Adrenal gland (tissue), 19 donors: ENCODE measurements at regions of chr9 and their contacts with region 1.

Region 1: GRCh38 chr9:87324613-87325194 is 173.0 kb upstream of the DAPK1 start:
- DNase-seq: no peak
- H3K4me3 ChIP-seq: no peak overlapping the region
- H3K27ac ChIP-seq: no peak overlapping the region
- H3K4me1 ChIP-seq: no peaks in the 10 kb centered on the region
- H3K27me3 ChIP-seq: no peaks in the 10 kb centered on the region
- CTCF ChIP-seq: peak; percentile 77 to 94 (median 85)
- POLR2A ChIP-seq: no peak

Region 2: DNA sequence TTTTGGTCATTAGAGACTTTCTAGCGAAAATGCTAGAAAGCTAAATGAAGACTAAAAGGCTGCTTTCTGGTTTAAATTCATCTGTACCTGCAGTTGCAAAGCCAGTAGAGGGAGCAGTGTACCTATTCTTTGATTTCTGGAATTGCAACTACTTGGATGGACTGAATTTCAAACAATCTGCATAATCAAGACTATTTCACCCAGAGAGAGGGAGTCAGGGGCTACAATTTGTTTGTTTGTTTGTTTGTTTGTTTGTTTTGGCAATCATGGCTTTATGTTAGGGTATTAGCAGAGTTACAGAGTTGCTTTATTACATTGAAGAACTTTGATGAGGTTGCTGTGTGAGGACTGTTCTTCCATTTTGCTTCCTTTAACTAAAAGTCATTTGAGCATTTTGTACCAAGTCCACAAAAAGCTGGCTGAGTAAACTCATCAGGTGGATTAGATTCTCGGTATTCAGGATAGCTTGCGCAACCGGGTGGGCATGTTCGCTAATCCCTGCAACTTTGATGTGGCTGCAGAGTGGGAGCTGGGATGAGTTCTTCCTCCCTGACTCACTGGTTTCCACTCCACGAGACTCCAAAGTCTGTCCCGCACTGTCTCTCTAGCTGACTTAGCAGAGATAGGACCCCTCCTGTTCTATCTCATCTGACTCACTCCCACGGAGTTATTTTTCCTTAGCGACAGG is 890.5 kb before region 1 on chr9:
- intact Hi-C with region 1: loop called in 1 of 2 experiments (anchors 5 kb)
- DNase-seq: peak in 1 of 7 donors; percentile 4
- H3K4me3 ChIP-seq: no peak overlapping the region
- H3K27ac ChIP-seq: no peak overlapping the region
- H3K4me1 ChIP-seq: no peaks in the 10 kb centered on the region
- H3K27me3 ChIP-seq: no peaks in the 10 kb centered on the region
- CTCF ChIP-seq: peak; percentile 67 to 79 (median 74)
- POLR2A ChIP-seq: no peak

Region 3: DNA sequence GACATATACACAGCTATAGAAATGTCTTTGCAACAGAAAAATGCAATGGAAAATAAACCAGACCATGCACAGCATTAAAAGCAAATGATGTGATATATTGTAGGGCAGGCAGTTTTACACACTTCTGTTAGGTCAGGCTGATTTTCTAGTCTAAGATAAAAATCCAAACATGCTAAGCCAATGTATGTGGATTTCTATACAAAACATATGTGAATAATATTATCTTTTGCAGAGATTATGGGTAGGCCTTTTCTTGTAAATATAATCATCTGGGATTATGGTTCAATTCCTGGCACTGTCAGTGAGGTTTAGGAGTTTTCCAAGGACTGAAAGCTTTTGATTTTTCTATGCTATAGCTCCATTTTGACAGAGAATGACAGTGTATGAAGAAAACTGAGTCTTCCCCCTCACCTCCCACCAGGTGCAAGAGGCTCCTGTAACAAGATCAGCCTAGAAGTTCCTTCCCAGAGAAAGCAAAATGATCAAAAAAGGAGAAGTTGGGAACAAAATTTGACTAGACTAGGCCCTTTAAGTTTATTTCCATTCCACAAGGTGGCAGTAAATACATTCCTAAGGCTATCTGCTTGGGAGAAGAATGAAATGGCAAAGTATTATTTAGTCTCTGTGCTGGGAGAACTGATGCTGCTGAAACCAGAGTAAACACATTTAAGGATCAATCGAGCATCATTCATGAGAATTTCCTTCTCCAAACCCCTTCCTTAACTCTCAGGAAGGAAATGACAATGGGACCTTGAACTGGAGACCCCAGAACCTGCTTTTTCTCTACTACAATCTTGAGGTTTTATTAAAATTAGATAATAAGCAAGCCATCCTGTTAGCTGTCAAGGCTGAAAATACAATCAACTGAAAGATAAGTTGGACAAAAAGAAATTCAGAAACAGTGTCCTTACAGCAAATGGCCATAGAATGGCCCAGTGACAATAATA is 837.5 kb before region 1 on chr9:
- intact Hi-C with region 1: loop called in 1 of 2 experiments (anchors 5 kb)
- DNase-seq: no peak
- H3K4me3 ChIP-seq: no peak overlapping the region
- H3K27ac ChIP-seq: no peak overlapping the region
- H3K4me1 ChIP-seq: no peaks in the 10 kb centered on the region
- H3K27me3 ChIP-seq: no peaks in the 10 kb centered on the region
- CTCF ChIP-seq: peak; percentile 49 to 74 (median 66)
- POLR2A ChIP-seq: no peak

Region 4: DNA sequence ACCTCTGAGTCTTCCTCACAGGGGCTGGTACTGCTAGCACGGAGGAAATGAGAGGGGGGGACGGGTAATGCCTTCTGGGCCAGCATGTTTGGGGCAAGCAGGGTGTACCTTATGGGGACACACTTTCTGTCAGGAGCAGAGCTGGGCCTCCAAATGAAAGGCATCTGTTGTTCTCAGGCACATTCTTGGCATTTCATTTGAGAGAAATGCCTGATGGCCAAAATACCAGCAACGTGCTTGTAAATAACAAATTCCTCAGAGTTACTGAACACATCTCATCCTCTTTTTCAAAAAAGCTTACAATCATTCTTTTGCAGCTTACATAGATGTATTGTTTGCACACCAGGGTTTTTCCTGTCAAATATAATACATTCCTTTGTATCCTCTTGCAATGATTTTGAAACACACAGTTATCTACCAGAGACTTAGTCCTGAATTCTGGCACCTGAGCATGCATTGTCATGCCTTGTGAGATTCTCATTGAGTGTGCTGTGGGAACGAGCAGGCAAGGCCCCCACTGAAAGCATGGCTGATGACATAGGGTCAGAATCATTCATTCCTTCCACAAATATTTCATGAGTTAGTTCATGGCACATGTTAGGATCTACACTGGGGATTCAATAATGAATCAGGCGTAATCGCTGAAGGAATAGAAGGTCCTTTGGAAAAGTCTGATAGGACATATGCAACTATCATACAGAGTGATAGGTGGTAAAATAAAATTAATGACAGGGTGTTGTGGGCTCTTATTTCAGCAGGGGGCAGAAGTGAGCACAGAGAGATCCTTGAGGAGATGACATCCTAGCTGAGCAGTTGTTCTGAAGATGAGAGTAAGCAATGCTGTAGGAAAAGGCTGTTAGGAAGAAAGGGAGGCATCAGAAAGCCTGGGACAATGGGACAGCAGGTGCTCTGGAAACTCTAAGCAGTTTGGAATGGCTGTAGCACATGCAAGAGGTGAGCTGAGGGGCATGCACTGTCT is 709.5 kb before region 1 on chr9:
- intact Hi-C with region 1: loop called in 1 of 2 experiments (anchors 10 kb)
- DNase-seq: peak in 4 of 7 donors; percentile 21 to 41 (median 28)
- H3K4me3 ChIP-seq: no peak overlapping the region
- H3K27ac ChIP-seq: no peak overlapping the region
- H3K4me1 ChIP-seq: no peaks in the 10 kb centered on the region
- H3K27me3 ChIP-seq: no peaks in the 10 kb centered on the region
- CTCF ChIP-seq: peak in 5 of 6 experiments; percentile 28 to 55 (median 52)
- POLR2A ChIP-seq: no peak

Region 5: DNA sequence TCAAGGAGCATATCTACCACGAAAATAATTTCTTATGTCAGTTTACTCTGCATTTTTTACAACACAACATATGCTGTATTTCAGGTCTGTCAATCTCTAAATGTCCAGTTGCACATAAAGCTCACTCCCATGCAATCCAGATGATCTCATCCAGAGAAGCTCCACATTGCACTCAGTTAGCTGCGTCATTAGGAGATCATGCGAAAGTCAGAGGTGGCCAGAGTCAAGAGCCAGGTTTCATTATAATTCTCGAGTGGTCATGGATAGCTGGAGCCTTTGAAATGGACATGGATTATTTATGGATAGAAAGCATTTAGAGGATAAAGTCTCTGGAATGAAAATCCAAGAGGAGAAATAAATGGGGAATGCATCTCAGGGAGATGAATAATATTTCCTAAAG is 609.7 kb before region 1 on chr9:
- intact Hi-C with region 1: no loop called
- DNase-seq: no peak
- H3K4me3 ChIP-seq: no peak overlapping the region
- H3K27ac ChIP-seq: no peak overlapping the region
- H3K4me1 ChIP-seq: no peaks in the 10 kb centered on the region
- H3K27me3 ChIP-seq: no peaks in the 10 kb centered on the region
- CTCF ChIP-seq: no peak
- POLR2A ChIP-seq: no peak

Region 6: GRCh38 chr9:86955561-86955960 is 369.1 kb before region 1 on chr9:
- intact Hi-C with region 1: loop called in 1 of 2 experiments (anchors 10 kb)
- DNase-seq: no peak
- H3K4me3 ChIP-seq: no peak overlapping the region
- H3K27ac ChIP-seq: no peak overlapping the region
- H3K4me1 ChIP-seq: no peaks in the 10 kb centered on the region
- H3K27me3 ChIP-seq: no peaks in the 10 kb centered on the region
- CTCF ChIP-seq: no peak
- POLR2A ChIP-seq: no peak

Region 7: GRCh38 chr9:87290241-87291052 is 34.3 kb before region 1 on chr9:
- intact Hi-C with region 1: no loop called
- DNase-seq: no peak
- H3K4me3 ChIP-seq: no peak overlapping the region
- H3K27ac ChIP-seq: no peak overlapping the region
- H3K4me1 ChIP-seq: no peaks in the 10 kb centered on the region
- H3K27me3 ChIP-seq: no peaks in the 10 kb centered on the region
- CTCF ChIP-seq: peak in 1 of 6 experiments; percentile 8
- POLR2A ChIP-seq: no peak

Region 8: DNA sequence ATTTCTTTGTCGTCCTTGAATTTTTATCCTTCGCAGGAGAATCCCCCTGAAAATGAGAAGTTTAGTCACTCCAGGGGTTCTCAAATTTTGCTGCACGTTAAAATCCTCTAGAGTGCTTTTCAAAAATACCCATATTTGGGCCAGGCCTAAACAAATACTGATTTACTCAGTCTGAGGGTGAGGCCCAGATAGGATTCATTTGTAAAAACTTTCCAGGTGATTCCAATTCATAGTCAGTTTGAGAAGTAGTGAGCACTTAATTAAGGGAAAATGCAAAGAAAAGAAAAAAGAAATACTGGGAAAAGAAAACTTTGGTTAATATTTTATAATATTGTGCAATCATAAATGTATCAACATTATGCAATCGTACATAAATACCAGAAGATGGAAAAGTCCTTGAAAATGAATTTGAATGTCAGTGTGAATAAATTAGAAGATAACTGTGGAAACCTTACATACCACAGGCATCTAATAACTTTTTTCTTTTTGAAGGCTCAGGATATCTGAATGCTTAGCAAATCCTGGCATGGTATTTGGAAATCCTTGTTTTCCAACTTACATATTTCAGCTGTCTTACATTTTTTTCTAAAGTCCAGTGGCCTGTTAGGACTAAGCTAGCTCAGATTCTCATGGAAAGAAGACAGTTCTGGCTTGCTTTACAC is 56.5 kb after region 1 on chr9:
- intact Hi-C with region 1: no loop called
- DNase-seq: no peak
- H3K4me3 ChIP-seq: no peak overlapping the region
- H3K27ac ChIP-seq: no peak overlapping the region
- H3K4me1 ChIP-seq: no peaks in the 10 kb centered on the region
- H3K27me3 ChIP-seq: no peaks in the 10 kb centered on the region
- CTCF ChIP-seq: no peak
- POLR2A ChIP-seq: no peak